ENCODE measurements at regions of chr1 and their contacts with region 1.

Region 1: GRCh38 chr1:88731475-88732269 is 47.6 kb downstream of the PKN2 start:
- DNase-seq: peak; percentile 89
- ATAC-seq: peak; percentile 93
- H3K4me3 ChIP-seq: peak overlapping the region; percentile 51; the same call in 1 of the 2 replicates
- H3K27ac ChIP-seq: peak overlapping the region; percentile 44
- H3K4me1 ChIP-seq: peaks cover 20% of the 10 kb centered on the region
- H3K27me3 ChIP-seq: no peaks in the 10 kb centered on the region
- CTCF ChIP-seq: no peak

Region 2: DNA sequence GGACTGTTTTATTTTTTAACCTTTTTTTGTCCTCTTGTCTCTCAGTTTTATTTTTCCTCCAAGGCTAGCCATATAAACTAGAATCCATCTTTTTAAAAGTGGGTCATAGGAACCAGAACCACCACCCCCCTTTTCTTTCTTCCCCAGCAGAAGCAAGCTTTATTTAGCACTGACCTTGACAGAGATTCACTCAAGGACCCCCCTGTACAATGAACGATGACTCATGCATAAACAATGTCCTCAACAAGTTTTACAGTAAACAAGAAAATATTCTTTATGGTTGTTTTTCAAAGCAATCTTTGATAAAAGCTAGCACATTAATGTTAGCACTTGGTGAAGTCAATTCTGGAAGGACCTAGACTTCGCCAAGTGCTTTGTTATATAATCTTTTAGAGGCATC is 33.5 kb before region 1 on chr1:
- CTCF ChIA-PET with region 1: no interaction called
- POLR2A ChIA-PET with region 1: no interaction called
- intact Hi-C with region 1: loop called (anchors 5 kb)
- DNase-seq: peak; percentile 28
- ATAC-seq: no peak
- H3K4me3 ChIP-seq: no peak overlapping the region
- H3K27ac ChIP-seq: no peak overlapping the region
- H3K4me1 ChIP-seq: peaks cover 25% of the 10 kb centered on the region
- H3K27me3 ChIP-seq: no peaks in the 10 kb centered on the region
- CTCF ChIP-seq: no peak

Region 3: DNA sequence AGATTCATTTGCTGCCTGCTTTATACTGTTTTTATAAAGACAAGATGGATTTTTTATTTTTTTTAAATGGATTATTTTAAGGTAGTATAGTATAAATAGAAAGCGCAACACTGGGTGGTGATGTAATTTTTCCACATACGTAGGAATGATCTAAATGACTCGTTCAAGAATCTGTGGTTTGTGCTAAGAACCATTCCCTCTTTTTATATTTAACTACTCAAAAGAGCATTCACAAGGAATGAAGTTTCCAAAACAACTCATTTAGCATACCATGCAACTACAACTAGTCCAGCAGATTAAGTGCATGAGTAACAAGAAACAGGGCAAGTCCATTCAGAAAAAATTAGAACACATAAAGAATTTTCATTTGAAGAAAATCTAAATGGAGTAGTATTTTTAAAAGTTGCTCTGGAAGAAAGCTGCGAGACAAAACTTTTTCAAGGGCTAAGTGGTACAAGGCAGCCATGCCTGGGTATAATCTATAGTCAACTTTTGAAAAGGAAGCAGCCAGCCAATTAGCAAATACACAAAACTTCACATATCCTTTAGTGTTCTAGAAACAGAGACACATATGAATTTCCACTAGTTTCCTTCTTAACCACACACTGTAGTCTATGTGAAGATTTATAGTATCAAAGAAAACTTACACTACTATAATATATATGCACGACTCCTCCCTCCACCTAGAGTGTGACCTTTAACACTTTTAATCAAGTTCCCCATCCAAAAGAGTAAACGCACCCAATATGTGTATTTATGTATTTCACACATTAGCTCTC is 136.3 kb after region 1 on chr1:
- CTCF ChIA-PET with region 1: no interaction called
- POLR2A ChIA-PET with region 1: no interaction called
- intact Hi-C with region 1: no loop called
- DNase-seq: no peak
- ATAC-seq: no peak
- H3K4me3 ChIP-seq: no peak overlapping the region
- H3K27ac ChIP-seq: no peak overlapping the region
- H3K4me1 ChIP-seq: no peaks in the 10 kb centered on the region
- H3K27me3 ChIP-seq: no peaks in the 10 kb centered on the region
- CTCF ChIP-seq: no peak

Region 4: DNA sequence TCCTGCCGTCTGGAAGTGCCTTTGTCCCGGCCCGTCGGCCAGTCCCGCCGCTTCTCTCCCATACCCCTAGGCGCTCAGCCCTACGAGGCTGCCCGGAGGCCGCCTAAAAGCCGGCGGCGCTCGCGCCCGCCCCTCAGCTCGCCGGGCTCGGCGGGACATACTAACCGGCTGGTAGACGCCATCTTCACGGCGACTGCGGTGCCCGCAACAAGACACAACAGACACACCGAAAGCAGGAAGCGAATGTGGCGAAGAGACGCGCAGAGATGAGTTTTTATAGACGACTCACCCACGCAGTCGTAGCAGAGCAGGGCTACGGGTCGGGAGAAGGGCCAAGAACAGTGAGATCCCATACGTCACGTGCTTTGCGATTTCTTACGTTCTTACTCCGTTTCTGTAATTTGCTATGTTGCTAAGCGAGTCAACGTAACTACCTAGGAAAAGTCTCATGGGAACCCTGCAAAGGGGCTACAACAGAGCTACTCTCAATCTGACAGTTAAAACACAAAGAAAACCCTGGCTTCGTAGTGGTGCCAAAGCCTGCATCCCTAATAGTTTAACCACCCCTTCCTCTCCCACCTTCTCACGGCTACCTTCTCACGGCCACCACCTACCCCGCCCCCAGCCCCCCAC is 159.8 kb after region 1 on chr1 and contains the start of gene GTF2B:
- CTCF ChIA-PET with region 1: no interaction called
- POLR2A ChIA-PET with region 1: interaction called, 3 read pairs
- intact Hi-C with region 1: loop called (anchors 5 kb)
- DNase-seq: peak; percentile 94
- ATAC-seq: peak; percentile 62
- H3K4me3 ChIP-seq: peak within 1 kb of the TSS; percentile 96
- H3K27ac ChIP-seq: peak within 1 kb of the TSS; percentile 33
- H3K4me1 ChIP-seq: peaks cover 27% of the 10 kb centered on the region
- H3K27me3 ChIP-seq: no peaks in the 10 kb centered on the region
- CTCF ChIP-seq: no peak
- total RNA-seq, gene GTF2B: 29.3 and 32.1 TPM in 2 replicates

Region 5: GRCh38 chr1:89065079-89065868 is 333.6 kb after region 1 on chr1 and contains the start of gene GBP1:
- CTCF ChIA-PET with region 1: no interaction called
- POLR2A ChIA-PET with region 1: no interaction called
- intact Hi-C with region 1: no loop called
- DNase-seq: peak; percentile 29
- ATAC-seq: no peak
- H3K4me3 ChIP-seq: peak within 1 kb of the TSS; percentile 53
- H3K27ac ChIP-seq: no peak within 1 kb of the TSS
- H3K4me1 ChIP-seq: peaks cover 6% of the 10 kb centered on the region; the same call in 1 of the 2 replicates
- H3K27me3 ChIP-seq: no peaks in the 10 kb centered on the region
- CTCF ChIP-seq: no peak
- total RNA-seq, gene GBP1: 1.0 and 1.2 TPM in 2 replicates